ENCODE measurements at regions of chr3 and their contacts with region 1.

Region 1: DNA sequence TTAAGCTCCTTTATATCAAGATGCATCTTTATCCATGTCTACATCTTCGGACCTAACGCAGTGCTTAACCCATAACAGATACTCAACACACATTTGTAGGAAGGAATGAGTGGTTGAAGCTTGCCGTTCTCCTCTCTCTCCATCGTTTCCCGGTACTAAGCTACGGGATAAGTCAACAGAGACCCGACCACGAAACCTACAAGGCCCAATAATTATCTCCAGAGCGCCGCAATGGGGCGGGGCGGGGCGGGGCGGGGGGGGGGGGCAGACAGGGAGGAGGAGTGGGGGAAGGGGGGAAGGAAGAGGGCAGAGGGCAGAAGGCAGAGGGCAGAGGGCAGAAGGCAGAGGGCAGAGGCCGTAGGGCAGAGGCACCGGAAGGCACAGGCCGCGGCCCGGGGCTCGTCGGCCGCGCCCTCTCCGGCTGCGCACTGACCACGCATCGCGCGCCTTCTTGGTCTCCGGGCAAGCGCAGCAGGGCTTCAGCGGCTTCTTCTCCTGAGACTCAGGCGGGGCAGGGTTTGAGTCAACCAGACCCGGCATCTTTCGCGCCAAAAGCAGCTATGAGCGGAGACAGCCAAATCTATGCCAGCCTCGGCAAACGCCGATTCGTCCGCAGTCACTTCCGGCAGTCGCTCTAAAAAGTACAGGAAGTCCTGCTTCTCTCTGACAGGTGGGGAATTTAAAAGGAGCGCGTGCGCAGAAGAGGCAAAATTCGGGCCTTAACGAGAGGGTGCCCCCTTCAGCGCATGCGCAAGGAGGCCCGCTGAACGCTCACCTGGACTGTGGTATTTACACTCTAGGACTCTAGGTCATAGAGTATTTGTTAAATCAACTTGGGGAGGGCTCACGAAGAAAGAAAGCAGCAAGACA is at the start of gene COX17:
- DNase-seq: peak; percentile 96
- CTCF ChIP-seq: no peak

Region 2: DNA sequence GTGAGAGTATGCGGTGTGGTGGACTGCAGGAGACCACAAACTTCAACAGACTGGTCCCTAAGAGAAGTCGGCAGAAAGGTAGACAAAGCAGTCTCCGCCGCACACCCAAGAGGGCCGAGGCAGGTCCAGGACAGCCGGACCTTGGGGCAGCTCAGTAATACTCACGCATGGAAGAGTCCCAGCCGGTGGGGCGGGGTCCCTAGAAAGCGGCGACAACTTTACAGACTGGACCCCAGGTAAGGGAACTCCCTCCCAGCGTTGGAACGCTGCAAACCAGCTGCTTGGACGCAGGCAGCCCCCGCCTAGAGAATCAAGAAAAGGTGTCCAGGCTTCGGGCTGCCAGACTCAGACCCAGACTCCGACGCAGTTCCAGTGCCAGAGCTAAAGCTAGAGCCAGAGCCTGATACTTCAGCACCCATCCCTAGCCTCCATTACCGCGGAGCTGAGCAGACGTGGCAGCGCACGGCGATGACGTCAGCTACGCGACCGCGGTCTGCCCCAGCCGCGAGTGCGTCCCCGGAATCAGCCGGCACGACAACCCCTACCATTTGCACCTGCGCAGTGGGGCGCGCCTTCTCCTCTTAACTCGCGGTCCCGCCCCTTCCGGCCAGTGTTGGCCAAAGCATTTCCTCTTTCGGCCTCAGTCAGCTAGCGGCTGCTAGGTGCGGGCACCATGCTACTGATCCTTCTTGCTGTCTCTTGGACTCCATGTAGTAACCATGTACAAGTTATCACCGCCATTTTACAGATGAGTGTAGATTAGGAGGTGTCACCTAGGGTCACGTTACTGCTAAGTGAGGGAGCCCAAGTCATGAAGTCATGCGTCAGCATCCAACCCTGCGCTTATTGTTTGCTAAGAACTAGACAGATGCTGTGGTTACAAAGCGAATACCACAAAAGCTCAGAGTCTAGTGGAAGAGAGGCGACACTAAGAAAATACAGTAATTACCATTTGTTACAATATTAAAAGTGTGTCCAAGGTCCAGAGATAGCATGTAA is 213.5 kb before region 1 on chr3 and contains the start of gene TMEM39A:
- CTCF ChIA-PET with region 1: interaction called, 11 read pairs
- POLR2A ChIA-PET with region 1: no interaction called
- DNase-seq: peak; percentile 99
- CTCF ChIP-seq: no peak

Region 3: GRCh38 chr3:119559441-119559963 is 117.5 kb before region 1 on chr3 and contains the start of gene CD80:
- CTCF ChIA-PET with region 1: interaction called, 15 read pairs
- POLR2A ChIA-PET with region 1: no interaction called
- DNase-seq: peak; percentile 65
- CTCF ChIP-seq: peak; percentile 67

Region 4: DNA sequence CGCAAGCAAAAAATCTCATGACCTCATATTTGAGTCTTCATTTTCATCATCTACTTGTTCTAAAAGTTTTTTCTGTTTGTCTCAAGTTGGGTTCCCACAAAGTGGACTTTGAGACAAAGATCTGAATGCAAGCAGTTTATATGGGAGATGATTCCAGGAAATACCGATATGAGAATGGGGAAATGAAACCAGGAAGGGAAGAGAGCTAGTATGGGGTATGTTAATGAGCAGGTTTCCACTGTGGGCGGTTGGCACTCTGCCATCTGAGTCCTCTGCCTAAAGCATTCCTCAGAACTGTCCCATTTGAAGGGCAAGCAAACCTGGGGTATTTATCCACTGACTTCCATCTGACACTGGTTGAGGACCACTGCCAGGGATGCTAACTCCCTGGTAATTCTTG is 88.9 kb before region 1 on chr3:
- CTCF ChIA-PET with region 1: interaction called, 14 read pairs
- POLR2A ChIA-PET with region 1: no interaction called
- DNase-seq: no peak
- CTCF ChIP-seq: no peak

Region 5: GRCh38 chr3:119662604-119663373 is 14.2 kb before region 1 on chr3:
- CTCF ChIA-PET with region 1: interaction called, 21 read pairs
- POLR2A ChIA-PET with region 1: no interaction called
- DNase-seq: no peak
- CTCF ChIP-seq: no peak

Region 6: GRCh38 chr3:119690043-119690656 is 13.1 kb after region 1 on chr3:
- CTCF ChIA-PET with region 1: interaction called, 128 read pairs
- POLR2A ChIA-PET with region 1: no interaction called
- DNase-seq: no peak
- CTCF ChIP-seq: peak; percentile 23